ENCODE measurements at regions of chr12 and their contacts with region 1.

Region 1: GRCh38 chr12:6688999-6689882 is at the start of gene ZNF384:
- DNase-seq: peak; percentile 98
- H3K4me3 ChIP-seq: peak within 1 kb of the TSS; percentile 65 to 99 (median 89)
- H3K27ac ChIP-seq: peak within 1 kb of the TSS; percentile 83
- H3K4me1 ChIP-seq: peaks cover 21% of the 10 kb centered on the region
- H3K27me3 ChIP-seq: no peaks in the 10 kb centered on the region
- CTCF ChIP-seq: peak in 1 of 2 donors; percentile 3
- POLR2A ChIP-seq: peak; percentile 92
- total RNA-seq, gene ZNF384: 52.8 and 58.5 TPM in 2 replicates

Region 2: GRCh38 chr12:6529291-6529741 is 159.9 kb before region 1 on chr12:
- CTCF ChIA-PET with region 1: no interaction called
- POLR2A ChIA-PET with region 1: no interaction called
- dilution Hi-C with region 1: no loop called
- intact Hi-C with region 1: no loop called
- DNase-seq: no peak
- H3K4me3 ChIP-seq: no peak overlapping the region
- H3K27ac ChIP-seq: no peak overlapping the region
- H3K4me1 ChIP-seq: peaks cover 17% of the 10 kb centered on the region
- H3K27me3 ChIP-seq: no peaks in the 10 kb centered on the region
- CTCF ChIP-seq: no peak
- POLR2A ChIP-seq: no peak

Region 3: GRCh38 chr12:6546016-6546415 is 143.2 kb before region 1 on chr12:
- CTCF ChIA-PET with region 1: no interaction called
- POLR2A ChIA-PET with region 1: no interaction called
- dilution Hi-C with region 1: no loop called
- intact Hi-C with region 1: no loop called
- DNase-seq: no peak
- H3K4me3 ChIP-seq: no peak overlapping the region
- H3K27ac ChIP-seq: no peak overlapping the region
- H3K4me1 ChIP-seq: peaks cover 35% of the 10 kb centered on the region
- H3K27me3 ChIP-seq: no peaks in the 10 kb centered on the region
- CTCF ChIP-seq: no peak
- POLR2A ChIP-seq: no peak

Region 4: DNA sequence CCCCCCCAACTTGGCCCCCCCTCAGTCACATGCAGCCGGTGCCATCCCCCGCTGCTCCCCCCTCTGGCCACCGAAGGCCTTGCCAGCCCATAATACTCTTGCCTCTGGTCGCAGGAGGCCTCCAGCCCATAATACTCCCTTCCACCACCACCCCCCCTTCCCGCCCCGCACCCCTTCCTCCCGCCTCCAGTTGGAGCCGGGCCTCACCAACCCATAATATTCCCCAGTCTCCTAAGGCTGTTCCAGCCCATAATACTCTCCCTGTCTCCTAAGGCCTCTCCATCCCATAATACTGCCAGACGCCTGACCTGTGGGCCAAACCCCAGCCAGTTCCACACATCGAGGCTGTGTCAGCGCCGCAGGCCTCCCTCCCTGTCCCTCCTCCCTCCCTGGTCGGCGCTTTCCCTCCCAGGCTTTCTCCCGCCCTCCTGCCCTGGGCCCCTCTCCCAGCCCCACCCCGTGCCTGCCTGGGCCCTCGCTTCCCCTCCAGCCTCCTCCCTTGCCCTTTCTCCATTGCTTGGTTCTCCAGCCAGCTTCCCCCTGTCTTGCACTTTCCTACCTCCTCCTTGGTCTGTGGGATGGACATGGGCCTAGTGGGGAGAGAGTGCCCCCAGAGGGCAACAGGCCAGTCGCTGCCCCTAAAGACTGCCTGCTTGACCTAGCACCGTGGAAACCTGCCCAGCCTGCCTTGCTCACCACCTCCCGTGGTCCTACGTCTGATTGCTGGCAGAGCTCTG is 75.3 kb before region 1 on chr12:
- CTCF ChIA-PET with region 1: interaction called, 21 read pairs
- POLR2A ChIA-PET with region 1: interaction called, 5 read pairs
- dilution Hi-C with region 1: no loop called
- intact Hi-C with region 1: loop called (anchors 1 kb)
- DNase-seq: peak; percentile 87
- H3K4me3 ChIP-seq: no peak overlapping the region
- H3K27ac ChIP-seq: no peak overlapping the region
- H3K4me1 ChIP-seq: peaks cover 11% of the 10 kb centered on the region
- H3K27me3 ChIP-seq: no peaks in the 10 kb centered on the region
- CTCF ChIP-seq: no peak
- POLR2A ChIP-seq: peak; percentile 39

Region 5: GRCh38 chr12:6662906-6663742 is 26.1 kb before region 1 on chr12 and contains the start of gene ING4:
- CTCF ChIA-PET with region 1: interaction called, 13 read pairs
- POLR2A ChIA-PET with region 1: interaction called, 3 read pairs
- dilution Hi-C with region 1: no loop called
- intact Hi-C with region 1: loop called (anchors 1 kb)
- DNase-seq: peak; percentile 99
- H3K4me3 ChIP-seq: peak within 1 kb of the TSS; percentile 23 to 95 (median 82)
- H3K27ac ChIP-seq: peak within 1 kb of the TSS; percentile 61
- H3K4me1 ChIP-seq: peaks cover 10% of the 10 kb centered on the region
- H3K27me3 ChIP-seq: no peaks in the 10 kb centered on the region
- CTCF ChIP-seq: no peak
- POLR2A ChIP-seq: peak; percentile 60
- total RNA-seq, gene ING4: 26.3 and 34.7 TPM in 2 replicates

Region 6: GRCh38 chr12:6723607-6724396 is 34.6 kb after region 1 on chr12 and contains the start of gene COPS7A:
- CTCF ChIA-PET with region 1: interaction called, 14 read pairs
- POLR2A ChIA-PET with region 1: interaction called, 13 read pairs
- dilution Hi-C with region 1: no loop called
- intact Hi-C with region 1: loop called (anchors 1 kb)
- DNase-seq: peak; percentile 98
- H3K4me3 ChIP-seq: peak within 1 kb of the TSS; percentile 45 to 48 (median 47)
- H3K27ac ChIP-seq: peak within 1 kb of the TSS; percentile 52
- H3K4me1 ChIP-seq: peaks cover 11% of the 10 kb centered on the region
- H3K27me3 ChIP-seq: no peaks in the 10 kb centered on the region
- CTCF ChIP-seq: no peak
- POLR2A ChIP-seq: peak; percentile 35
- total RNA-seq, gene COPS7A: 36.5 and 41.1 TPM in 2 replicates

Region 7: DNA sequence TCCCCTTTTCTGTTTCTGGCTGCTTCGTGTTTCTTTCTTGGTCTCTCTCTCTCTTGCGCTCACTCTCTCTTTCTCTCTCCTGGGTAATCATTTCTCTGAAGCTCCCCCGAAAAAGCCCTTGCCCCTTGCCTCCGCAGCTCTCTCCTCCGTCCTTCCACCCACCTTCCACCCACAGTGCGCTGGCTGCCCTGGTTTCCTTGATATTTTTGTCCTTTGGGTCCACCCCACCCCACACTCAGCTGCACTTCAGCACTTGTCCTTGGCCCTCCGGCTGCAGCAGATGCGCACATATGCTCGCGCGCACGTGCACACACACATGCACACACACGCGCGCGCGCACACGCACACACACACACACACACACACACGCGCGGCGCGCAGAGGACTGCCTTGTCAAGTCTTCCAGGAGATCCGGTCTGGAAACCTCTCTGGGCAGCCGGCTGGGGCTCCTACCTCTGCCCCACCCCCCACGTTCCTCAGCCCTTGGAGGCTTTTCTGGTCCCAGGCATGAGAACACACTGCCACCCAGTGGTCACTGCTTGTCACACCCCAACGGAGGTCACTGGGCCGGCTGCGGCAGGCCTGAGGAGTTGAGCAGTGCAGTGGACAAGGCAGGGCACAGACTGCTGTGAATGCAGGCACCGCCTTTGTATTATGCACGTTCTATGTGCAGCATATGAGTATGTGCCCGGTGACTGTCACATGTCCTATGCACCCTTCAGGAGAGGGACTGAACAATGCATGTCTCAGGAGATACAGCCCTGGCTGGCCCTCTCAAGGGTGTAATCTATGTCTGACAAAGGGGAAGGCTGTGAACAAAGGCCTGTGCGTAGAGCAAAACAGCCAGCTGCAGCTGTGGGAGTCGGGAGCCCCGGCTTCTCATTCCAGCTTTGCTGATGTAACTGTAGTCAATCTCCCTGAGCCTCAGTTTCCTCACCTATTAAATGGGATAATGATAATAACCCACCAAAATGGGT is 89.6 kb after region 1 on chr12:
- CTCF ChIA-PET with region 1: interaction called, 4 read pairs
- POLR2A ChIA-PET with region 1: no interaction called
- dilution Hi-C with region 1: no loop called
- intact Hi-C with region 1: loop called (anchors 5 kb)
- DNase-seq: peak; percentile 94
- H3K4me3 ChIP-seq: peak overlapping the region in 1 of 3 experiments; percentile 6
- H3K27ac ChIP-seq: no peak overlapping the region
- H3K4me1 ChIP-seq: peaks cover 5% of the 10 kb centered on the region
- H3K27me3 ChIP-seq: no peaks in the 10 kb centered on the region
- CTCF ChIP-seq: peak; percentile 93 to 95
- POLR2A ChIP-seq: peak; percentile 22

Region 8: GRCh38 chr12:6810758-6811157 is 121.5 kb after region 1 on chr12:
- CTCF ChIA-PET with region 1: no interaction called
- POLR2A ChIA-PET with region 1: no interaction called
- dilution Hi-C with region 1: no loop called
- intact Hi-C with region 1: no loop called
- DNase-seq: no peak
- H3K4me3 ChIP-seq: no peak overlapping the region
- H3K27ac ChIP-seq: no peak overlapping the region
- H3K4me1 ChIP-seq: no peaks in the 10 kb centered on the region
- H3K27me3 ChIP-seq: peaks cover 0 to 11% of the 10 kb centered on the region in 2 experiments
- CTCF ChIP-seq: no peak
- POLR2A ChIP-seq: no peak